ENCODE measurements at regions of chr1 and their contacts with region 1.

Region 1: DNA sequence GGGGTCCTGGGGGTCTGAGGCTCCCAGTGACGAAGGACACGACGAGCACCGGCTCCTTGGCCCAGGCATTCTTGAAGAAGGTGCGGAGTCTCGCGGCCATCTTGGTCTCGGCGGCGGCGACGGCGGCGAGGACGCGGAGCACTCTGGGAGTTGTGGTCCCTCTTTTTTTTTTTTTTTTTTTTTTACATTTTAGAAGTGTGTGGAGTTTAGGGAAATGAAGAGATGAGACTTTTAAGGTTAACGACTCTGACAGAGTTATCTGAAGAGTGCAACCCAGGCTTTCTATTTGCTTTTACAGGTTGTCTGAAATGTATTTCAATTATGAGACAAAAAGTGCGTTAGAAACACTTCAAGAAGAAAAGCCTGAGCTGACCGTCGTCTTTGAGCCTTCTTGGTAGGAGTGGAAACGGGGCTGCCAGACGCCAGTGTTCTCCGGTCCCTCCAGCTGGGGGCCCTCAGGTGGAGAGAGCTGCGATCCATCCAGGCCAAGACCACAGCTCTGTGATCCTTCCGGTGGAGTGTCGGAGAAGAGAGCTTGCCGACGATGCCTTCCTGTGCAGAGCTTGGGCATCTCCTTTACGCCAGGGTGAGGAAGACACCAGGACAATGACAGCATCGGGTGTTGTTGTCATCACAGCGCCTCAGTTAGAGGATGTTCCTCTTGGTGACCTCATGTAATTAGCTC is 9.7 kb downstream of the OR2B11 start:
- DNase-seq: peak; percentile 52 to 94 (median 67)

Region 2: DNA sequence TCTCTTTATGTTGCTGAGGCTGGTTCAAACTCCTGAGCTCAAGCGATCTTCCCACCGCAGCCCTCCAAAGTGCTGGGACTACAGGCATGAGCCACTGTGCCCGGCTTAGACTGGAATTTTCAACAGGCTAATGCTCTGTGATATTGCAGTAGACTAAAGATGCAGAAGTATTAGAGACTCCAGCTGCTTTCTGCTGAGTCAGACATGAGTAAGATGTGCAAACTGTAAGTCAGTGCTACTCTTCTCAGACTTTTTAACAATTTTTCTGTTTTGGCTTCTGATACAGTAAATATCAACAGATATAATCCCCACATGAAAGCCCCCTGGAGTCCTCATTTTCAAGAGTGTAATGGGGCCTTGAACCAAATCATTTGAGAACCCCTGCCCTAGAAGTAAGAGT is 61.6 kb before region 1 on chr1:
- intact Hi-C with region 1: loop called (anchors 10 kb)
- DNase-seq: no peak

Region 3: GRCh38 chr1:247487057-247487456 is 38.8 kb after region 1 on chr1:
- intact Hi-C with region 1: no loop called
- DNase-seq: peak in 3 of 10 donors; percentile 4 to 45 (median 11)